ENCODE measurements at regions of chr21 and their contacts with region 1.

Region 1: DNA sequence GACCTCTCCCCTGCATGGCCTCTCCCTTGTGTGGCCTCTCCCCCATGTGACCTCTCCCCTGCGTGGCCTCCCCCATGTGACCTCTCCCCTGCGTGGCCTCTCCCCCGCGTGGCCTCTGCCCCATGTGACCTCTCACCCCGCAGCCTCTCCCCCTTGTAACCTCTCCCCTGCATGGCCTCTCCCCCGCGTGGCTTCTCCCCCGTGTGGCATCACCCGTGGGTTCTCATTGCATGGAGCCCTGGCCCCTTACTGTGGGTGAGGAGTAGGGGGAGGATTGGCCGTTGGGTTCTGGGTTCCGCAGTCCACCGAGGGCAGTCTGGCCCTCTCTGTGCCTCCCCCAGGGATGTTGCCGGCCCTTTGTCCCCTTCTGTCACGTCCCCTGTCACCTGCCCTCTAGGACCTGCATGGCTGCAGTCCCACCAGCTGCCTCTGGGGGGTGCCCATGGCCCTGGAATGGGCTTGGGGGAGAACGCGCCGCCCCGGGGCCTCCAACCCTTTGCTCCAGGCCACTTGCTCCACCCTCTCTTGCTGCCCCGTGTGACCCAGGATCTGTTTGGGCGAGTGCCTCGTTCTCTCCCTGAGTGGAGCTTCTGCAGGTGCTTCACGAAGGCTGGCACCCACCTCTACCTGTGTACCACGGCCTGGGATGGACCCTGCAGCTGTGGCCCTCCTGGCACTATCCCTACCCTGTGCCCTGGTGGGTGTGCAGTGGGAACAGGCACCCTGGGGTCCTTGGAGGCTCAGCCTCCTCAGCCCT is 21.3 kb downstream of the RRP1 start:
- DNase-seq: no peak
- H3K4me3 ChIP-seq: no peak overlapping the region
- CTCF ChIP-seq: peak; percentile 96

Region 2: GRCh38 chr21:43789276-43790009 is 21.2 kb before region 1 on chr21 and contains the start of gene RRP1:
- CTCF ChIA-PET with region 1: interaction called, 22 read pairs
- POLR2A ChIA-PET with region 1: no interaction called
- DNase-seq: no peak
- H3K4me3 ChIP-seq: peak within 1 kb of the TSS; percentile 99
- CTCF ChIP-seq: peak; percentile 84

Region 3: GRCh38 chr21:43938751-43939442 is 128.2 kb after region 1 on chr21:
- CTCF ChIA-PET with region 1: interaction called, 29 read pairs
- POLR2A ChIA-PET with region 1: no interaction called
- DNase-seq: no peak
- H3K4me3 ChIP-seq: peak overlapping the region; percentile 45
- CTCF ChIP-seq: peak; percentile 97

Region 4: DNA sequence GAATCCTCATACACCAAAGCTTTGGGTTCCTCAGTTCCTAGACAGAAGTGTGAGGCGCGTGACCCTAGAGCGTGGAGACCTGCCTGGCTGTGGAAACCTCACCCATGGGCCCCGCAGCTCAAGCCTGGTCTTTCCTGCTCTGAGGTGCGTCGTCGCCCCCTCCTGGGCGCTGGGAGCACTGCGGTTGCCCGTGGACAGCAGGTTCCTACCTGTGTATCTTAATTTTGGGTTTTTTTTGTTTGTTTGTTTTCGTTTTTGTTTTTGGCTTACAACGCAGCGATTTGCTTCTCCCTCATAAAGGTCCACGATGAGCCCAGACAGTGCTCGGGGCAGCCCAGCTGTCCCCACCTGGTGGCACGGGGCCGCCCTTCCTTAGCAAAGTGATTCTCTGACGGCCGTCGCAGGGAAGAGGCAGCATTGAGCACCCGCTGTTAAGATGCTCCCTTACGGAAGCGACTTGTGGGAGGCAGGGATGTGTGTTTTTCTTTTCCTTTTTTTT is 164.9 kb after region 1 on chr21:
- CTCF ChIA-PET with region 1: interaction called, 15 read pairs
- POLR2A ChIA-PET with region 1: no interaction called
- DNase-seq: no peak
- H3K4me3 ChIP-seq: no peak overlapping the region
- CTCF ChIP-seq: peak; percentile 95

Region 5: DNA sequence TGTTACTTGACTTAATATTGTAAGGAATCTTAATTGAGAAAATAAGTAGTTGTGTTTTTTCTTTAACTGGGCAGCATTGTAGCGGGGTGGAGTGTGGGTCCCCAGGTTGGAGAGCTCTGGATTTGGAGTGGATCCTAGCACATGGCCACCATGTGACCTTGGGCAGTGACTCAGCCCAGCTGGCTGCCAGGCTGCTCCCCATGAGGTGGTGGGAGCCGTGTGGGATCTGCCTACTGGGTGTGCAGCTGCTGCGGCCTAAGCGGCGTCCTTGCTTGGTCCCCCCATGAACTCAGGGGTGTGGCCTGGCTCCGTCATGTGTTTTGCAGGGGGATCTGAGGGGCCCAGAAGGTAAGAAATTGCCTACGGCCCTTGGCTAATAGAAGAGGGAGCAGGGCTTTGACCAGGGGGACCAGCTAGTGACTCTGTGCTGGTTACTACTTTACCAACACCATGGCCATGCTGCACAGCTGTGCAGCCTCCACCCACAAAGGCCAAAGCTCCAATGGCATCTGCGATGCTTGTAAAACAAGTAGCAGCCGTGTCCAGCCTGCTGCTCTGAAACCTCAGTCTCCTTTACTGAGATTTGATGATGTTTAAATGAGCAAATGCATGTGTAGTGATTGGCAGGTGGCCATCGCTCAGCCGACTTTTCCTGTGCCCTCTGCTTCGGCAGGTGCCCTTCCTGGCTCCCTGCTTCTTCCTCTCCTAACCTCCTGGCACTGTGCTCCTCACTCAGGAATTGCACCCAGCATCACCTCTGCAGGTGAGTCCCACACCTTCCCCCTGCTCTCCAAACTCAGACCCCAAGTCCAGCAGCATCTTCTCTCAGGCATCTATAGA is 1332.0 kb after region 1 on chr21:
- CTCF ChIA-PET with region 1: no interaction called
- POLR2A ChIA-PET with region 1: no interaction called
- DNase-seq: no peak
- H3K4me3 ChIP-seq: no peak overlapping the region
- CTCF ChIP-seq: no peak